ENCODE measurements at regions of chr6 and their contacts with region 1.

Region 1: DNA sequence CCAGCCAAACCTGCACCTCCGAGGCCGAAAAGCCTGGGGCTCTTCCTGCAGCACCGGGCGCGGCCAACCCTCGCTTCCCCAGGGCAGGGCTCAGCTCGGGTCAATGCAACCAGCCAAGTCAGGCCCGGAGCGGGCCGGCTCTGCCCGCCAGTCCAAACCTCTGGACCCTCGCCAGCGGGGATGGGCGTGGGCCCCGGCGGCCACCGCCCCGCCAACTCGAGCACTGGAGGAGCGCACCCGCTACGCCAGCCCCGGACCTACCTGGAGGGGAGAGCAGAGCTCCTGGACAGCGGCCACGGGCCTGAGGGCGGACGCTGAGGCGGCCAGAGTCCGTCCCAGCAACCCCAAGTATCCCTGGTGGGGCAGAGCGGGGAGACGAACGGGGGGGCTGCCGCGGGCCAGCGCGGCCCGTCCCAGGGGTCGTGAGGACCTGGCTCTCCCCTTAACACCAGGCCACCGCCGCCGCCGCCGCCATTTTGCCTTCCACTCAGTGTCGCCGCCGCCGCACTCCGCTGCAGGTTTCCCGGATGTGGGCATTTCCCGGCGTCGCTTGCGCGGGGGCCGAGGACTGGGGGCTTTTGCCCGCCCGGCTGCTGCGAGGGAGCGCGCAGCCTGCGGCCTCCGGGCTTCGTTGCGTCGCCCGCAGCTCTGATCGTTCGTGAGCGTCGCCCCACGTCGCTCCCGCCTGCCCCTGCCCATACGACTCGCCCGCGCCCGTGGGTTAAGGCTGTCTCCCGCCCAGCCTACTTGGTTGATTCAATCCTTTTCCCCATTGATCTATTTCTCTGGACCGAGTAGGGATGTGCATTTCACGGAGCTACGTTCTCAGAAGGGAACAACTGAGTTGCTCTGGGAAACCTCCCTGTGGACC is at the start of gene LATS1:
- DNase-seq: peak; percentile 89

Region 2: GRCh38 chr6:149405823-149406765 is 311.7 kb before region 1 on chr6:
- CTCF ChIA-PET with region 1: no interaction called
- POLR2A ChIA-PET with region 1: no interaction called
- DNase-seq: no peak

Region 3: DNA sequence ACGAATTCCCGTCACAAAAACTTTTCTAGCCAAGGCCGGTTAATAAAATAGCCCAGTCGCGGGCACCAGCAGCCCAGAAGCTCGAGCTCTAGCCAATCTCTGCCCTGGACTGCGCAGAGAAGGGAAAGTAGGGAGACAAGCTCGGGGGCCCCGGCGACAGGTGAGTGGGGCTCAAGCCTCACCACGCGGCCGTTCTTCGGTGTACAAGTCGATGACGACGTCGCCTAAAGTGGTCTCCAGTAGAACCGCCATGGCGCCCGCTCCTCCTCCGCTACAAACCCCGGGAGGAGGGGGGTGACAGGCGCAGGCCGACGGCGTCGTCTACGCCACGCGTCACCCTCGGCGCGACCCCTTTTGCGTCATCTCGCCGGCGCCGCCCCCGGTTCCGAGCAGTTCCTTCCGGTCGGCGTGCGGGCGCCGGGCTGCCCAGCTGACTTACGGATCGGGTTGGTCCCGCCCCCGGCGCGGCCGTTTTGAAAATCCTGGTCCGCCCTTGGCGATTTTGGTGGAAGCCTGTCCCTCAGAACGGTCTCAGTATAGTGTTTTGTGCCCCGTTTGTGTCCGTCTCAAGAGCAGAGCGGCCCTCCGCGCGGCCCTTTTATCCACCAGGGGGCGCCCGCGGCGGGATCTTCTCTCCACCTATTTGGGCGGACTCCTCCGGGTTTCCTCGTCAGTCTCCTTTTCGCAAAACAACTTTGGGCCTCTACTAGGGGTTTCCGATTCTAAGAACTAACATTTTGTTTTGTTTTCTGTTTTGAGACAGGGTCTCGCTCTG is 171.9 kb before region 1 on chr6 and contains the start of gene PPIL4:
- CTCF ChIA-PET with region 1: no interaction called
- POLR2A ChIA-PET with region 1: interaction called, 10 read pairs
- DNase-seq: peak; percentile 96

Region 4: GRCh38 chr6:149565527-149566409 is 152.1 kb before region 1 on chr6 and contains the start of gene GINM1:
- CTCF ChIA-PET with region 1: no interaction called
- POLR2A ChIA-PET with region 1: interaction called, 11 read pairs
- DNase-seq: peak; percentile 99

Region 5: DNA sequence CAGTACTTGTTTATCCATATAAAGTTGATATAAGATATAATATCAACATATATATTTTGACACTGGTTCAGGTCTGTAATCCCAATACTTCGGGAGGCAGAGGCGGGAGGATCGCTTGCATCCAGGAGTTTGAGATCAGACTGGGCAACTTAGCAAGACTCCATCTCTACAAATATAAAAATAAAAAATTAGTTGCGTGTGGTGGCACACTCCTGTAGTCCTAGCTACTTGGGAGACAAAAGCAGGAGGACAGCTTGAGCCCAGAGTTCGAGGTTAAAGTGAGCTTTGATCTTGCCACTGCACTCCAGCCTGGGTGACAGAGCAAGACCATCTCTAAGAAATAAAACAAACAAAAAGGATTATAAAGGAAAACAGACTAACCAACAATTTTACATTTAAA is 60.4 kb before region 1 on chr6:
- CTCF ChIA-PET with region 1: no interaction called
- POLR2A ChIA-PET with region 1: no interaction called
- DNase-seq: no peak

Region 6: DNA sequence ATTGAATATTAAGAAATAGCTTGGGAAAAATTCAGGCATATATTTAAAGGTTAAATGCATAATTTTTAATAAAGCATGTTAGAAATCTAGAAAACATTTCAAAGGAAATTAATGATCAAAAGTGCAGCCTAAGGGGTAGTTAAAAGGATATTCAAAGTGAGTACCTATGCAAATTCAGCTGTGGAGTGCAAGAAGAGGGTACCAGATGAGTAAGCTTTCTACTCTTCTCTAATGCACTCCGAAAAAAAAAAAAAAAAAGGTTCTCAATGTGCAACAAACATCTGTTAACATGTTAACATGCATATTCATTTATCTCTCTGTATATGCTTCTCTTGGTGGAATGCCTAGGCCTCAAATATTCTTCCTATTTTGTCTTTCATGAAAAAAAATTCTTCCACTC is 37.3 kb before region 1 on chr6:
- CTCF ChIA-PET with region 1: no interaction called
- POLR2A ChIA-PET with region 1: no interaction called
- DNase-seq: no peak

Region 7: DNA sequence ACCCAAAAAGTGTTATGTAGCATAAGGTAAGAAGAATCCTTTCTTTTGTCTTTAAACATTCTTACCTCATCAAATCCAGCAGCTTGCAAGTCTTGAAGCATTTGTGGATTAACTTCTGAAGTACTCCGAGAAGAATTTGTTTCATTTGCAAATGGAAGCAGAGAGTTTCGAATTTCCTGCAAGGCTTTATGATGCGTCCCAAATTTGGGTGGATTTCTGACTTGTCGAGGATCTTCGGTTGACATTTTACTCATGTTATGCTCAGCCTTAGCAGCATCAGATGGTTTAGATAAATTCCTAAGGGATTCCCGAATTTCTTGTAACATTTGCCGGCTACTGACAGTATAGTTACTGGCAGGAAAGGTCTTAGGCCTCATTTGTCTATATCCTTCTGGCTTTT is 16.1 kb before region 1 on chr6:
- CTCF ChIA-PET with region 1: interaction called, 3 read pairs
- POLR2A ChIA-PET with region 1: interaction called, 20 read pairs
- DNase-seq: no peak

Region 8: GRCh38 chr6:149746147-149746946 is 28.5 kb after region 1 on chr6 and contains the start of gene NUP43:
- CTCF ChIA-PET with region 1: no interaction called
- POLR2A ChIA-PET with region 1: interaction called, 17 read pairs
- DNase-seq: peak; percentile 90

Measured in HEK293T (cell line).